HCT116 (cell line): ENCODE measurements at regions of chr14 and their contacts with region 1.

Region 1: GRCh38 chr14:33839193-33840076 is 111.4 kb downstream of the EGLN3 start:
- DNase-seq: peak; percentile 31
- ATAC-seq: peak; percentile 86
- H3K4me3 ChIP-seq: no peak overlapping the region
- H3K27ac ChIP-seq: no peak overlapping the region
- H3K4me1 ChIP-seq: no peaks in the 10 kb centered on the region
- H3K27me3 ChIP-seq: no peaks in the 10 kb centered on the region
- CTCF ChIP-seq: peak; percentile 65 to 90 (median 74); a peak in 5 of 6 replicates
- POLR2A ChIP-seq: no peak
- RAD21 ChIP-seq: peak; percentile 78

Region 2: GRCh38 chr14:34098045-34098984 is 258.9 kb after region 1 on chr14:
- CTCF ChIA-PET with region 1: interaction called, 63 read pairs
- POLR2A ChIA-PET with region 1: interaction called, 4 read pairs
- RAD21 ChIA-PET with region 1: interaction called, 5 to 6 read pairs
- intact Hi-C with region 1: loop called (anchors 1 kb)
- DNase-seq: peak; percentile 46
- ATAC-seq: peak; percentile 73
- H3K4me3 ChIP-seq: no peak overlapping the region
- H3K27ac ChIP-seq: no peak overlapping the region
- H3K4me1 ChIP-seq: no peaks in the 10 kb centered on the region
- H3K27me3 ChIP-seq: no peaks in the 10 kb centered on the region
- CTCF ChIP-seq: peak; percentile 61 to 91 (median 83)
- POLR2A ChIP-seq: no peak
- RAD21 ChIP-seq: peak; percentile 94

Region 3: GRCh38 chr14:34227834-34228649 is 388.6 kb after region 1 on chr14:
- CTCF ChIA-PET with region 1: interaction called, 6 read pairs
- POLR2A ChIA-PET with region 1: no interaction called
- RAD21 ChIA-PET with region 1: no interaction called
- intact Hi-C with region 1: loop called (anchors 1 kb)
- DNase-seq: peak; percentile 37
- ATAC-seq: peak; percentile 99
- H3K4me3 ChIP-seq: no peak overlapping the region
- H3K27ac ChIP-seq: no peak overlapping the region
- H3K4me1 ChIP-seq: peaks cover 0 to 4% of the 10 kb centered on the region in 2 experiments; a peak in 2 of 4 replicates
- H3K27me3 ChIP-seq: peaks cover 7% of the 10 kb centered on the region
- CTCF ChIP-seq: peak; percentile 61 to 87 (median 84); a peak in 5 of 6 replicates
- POLR2A ChIP-seq: no peak
- RAD21 ChIP-seq: peak; percentile 78

Region 4: GRCh38 chr14:34300882-34301734 is 461.7 kb after region 1 on chr14:
- CTCF ChIA-PET with region 1: interaction called, 8 read pairs
- POLR2A ChIA-PET with region 1: no interaction called
- RAD21 ChIA-PET with region 1: no interaction called
- intact Hi-C with region 1: loop called (anchors 1 kb)
- DNase-seq: peak; percentile 28
- ATAC-seq: peak; percentile 75
- H3K4me3 ChIP-seq: no peak overlapping the region
- H3K27ac ChIP-seq: no peak overlapping the region
- H3K4me1 ChIP-seq: peaks cover 9% of the 10 kb centered on the region in 2 experiments
- H3K27me3 ChIP-seq: no peaks in the 10 kb centered on the region
- CTCF ChIP-seq: peak; percentile 34 to 83 (median 70); a peak in 5 of 6 replicates
- POLR2A ChIP-seq: no peak
- RAD21 ChIP-seq: peak; percentile 70

Region 5: DNA sequence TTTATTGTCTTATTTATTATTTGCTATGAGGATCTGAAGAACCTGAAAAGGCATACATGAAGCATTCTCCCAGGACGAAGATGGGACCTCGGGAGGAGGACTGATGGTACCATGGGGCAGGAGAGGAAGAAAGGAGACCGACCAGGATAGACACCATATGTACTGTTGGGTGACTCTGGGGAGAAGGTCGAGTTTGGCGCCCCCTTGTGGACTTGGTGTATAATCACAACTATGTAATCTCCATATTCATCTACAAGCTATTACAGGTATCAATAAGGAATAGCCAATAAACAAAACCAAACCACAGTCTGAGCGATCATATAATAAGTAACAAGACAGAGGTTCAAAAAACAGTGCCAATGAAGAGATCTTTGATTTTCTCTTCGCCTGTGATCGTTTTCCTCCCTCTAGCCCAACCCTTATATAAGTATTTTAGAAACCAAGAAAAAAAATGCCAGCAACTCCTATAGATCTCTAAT is 483.5 kb after region 1 on chr14:
- CTCF ChIA-PET with region 1: interaction called, 6 read pairs
- POLR2A ChIA-PET with region 1: no interaction called
- RAD21 ChIA-PET with region 1: no interaction called
- intact Hi-C with region 1: loop called (anchors 2 kb)
- DNase-seq: peak; percentile 46
- ATAC-seq: peak; percentile 92
- H3K4me3 ChIP-seq: no peak overlapping the region
- H3K27ac ChIP-seq: no peak overlapping the region
- H3K4me1 ChIP-seq: no peaks in the 10 kb centered on the region
- H3K27me3 ChIP-seq: peaks cover 9% of the 10 kb centered on the region; the same call in 1 of the 2 replicates
- CTCF ChIP-seq: peak; percentile 35 to 92 (median 72); a peak in 5 of 6 replicates
- POLR2A ChIP-seq: no peak
- RAD21 ChIP-seq: peak; percentile 36

Region 6: GRCh38 chr14:34496679-34497513 is 657.5 kb after region 1 on chr14:
- CTCF ChIA-PET with region 1: no interaction called
- POLR2A ChIA-PET with region 1: no interaction called
- RAD21 ChIA-PET with region 1: no interaction called
- intact Hi-C with region 1: loop called (anchors 10 kb)
- DNase-seq: peak; percentile 97
- ATAC-seq: peak; percentile 88
- H3K4me3 ChIP-seq: peak overlapping the region; percentile 19 to 43; a peak in 3 of 4 replicates
- H3K27ac ChIP-seq: peak overlapping the region; percentile 62
- H3K4me1 ChIP-seq: peaks cover 21 to 36% of the 10 kb centered on the region in 2 experiments
- H3K27me3 ChIP-seq: no peaks in the 10 kb centered on the region
- CTCF ChIP-seq: peak in 2 of 3 experiments; percentile 12 to 22; a peak in 2 of 6 replicates
- POLR2A ChIP-seq: no peak
- RAD21 ChIP-seq: peak; percentile 19; the same call in 1 of the 2 replicates